Vagina (tissue), 2 donors: ENCODE measurements at regions of chr16 and their contacts with region 1.

Region 1: DNA sequence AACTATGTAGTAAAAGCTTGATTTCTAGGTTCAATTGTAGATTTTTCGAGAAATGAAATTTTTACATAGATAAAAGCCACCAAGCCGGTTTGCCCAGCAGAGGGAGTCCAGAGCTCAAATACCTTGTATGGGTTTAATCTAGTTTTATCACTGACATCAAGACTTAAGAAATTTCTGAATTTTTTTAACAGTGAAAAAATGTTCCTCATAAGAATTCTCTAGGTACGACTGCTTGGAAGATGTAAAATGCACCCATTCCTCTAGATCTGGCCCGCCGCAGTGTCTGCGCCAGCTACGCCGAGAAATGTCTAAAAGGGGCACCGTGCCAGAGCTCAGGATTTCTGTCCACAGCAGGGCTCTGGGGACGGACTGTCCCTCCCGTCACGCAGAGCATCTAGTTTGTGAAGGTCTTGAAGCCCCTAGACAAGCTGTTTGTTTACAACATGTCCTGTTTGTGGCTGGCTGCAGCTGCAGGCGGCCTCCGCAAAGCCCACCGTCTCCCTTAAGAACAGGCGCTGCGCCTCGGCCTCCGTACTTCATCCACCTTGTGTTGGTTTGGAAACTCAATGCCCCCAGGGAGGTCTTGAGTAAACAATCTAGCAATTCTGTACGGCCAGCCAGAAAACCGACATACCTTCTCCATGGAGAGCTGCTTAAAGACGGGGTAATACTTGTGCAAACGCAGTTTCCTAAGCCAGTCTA is 24.8 kb downstream of the MAP1LC3B start:
- DNase-seq: no peak
- H3K4me3 ChIP-seq: no peak overlapping the region
- H3K27ac ChIP-seq: no peak overlapping the region
- H3K4me1 ChIP-seq: no peaks in the 10 kb centered on the region
- H3K27me3 ChIP-seq: no peaks in the 10 kb centered on the region
- CTCF ChIP-seq: peak; percentile 45 to 74 (median 64)
- POLR2A ChIP-seq: no peak

Region 2: GRCh38 chr16:85767569-85767968 is 1649.4 kb before region 1 on chr16:
- intact Hi-C with region 1: no loop called
- DNase-seq: no peak
- H3K4me3 ChIP-seq: no peak overlapping the region
- H3K27ac ChIP-seq: no peak overlapping the region
- H3K4me1 ChIP-seq: no peaks in the 10 kb centered on the region
- H3K27me3 ChIP-seq: no peaks in the 10 kb centered on the region
- CTCF ChIP-seq: no peak
- POLR2A ChIP-seq: no peak

Region 3: DNA sequence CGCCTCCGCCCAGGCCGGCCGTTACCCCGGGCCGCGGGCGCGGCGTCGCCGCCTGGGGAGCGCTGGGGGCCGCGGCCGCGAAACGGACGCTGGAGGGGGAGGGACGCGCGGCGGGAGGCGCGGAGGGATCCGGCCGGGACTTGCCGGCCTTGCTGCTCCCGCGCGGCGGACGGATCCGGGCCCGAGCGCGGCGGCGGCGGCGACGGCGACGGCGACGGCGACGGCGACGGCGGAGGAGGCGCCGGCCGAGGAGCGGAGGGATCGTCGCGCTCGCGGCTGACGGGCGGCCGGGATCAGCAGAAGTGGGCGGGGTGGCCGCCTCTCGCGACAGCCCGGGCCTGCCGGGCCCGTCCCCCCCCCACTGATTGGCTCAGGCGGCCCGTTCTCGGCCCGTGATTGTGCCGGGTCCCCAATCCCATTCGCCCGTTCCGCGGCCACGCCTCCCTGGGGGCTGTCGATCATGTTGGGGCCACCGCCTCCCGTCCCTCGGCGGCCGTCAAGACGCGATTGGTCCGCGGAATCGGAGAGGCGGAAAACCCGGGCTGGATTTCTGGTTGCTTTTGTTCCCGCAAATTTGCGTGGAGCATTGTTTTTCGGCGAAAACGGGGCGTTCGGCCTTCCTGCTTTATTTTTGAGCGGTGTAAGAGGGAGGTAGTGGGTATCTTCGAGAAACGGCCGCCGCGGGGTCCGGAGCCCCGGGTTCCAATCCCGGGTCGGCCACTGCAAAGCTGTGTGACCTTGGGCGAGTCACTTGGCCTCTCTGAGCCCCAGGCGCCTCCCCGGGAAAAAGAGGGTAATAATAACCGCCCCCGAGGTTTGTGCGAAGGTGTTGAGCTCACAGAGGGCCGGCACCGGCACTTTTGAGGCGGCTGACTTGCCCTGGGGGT is 76.0 kb after region 1 on chr16 and contains the start of gene ZCCHC14:
- intact Hi-C with region 1: loop called (anchors 10 kb)
- DNase-seq: peak in 1 of 2 donors; percentile 98
- H3K4me3 ChIP-seq: peak within 1 kb of the TSS; percentile 49 to 68
- H3K27ac ChIP-seq: peak within 1 kb of the TSS; percentile 71
- H3K4me1 ChIP-seq: peaks cover 46% of the 10 kb centered on the region
- H3K27me3 ChIP-seq: no peaks in the 10 kb centered on the region
- CTCF ChIP-seq: no peak
- POLR2A ChIP-seq: peak; percentile 17 to 88
- total RNA-seq, gene ZCCHC14: 74.2 TPM

Region 4: DNA sequence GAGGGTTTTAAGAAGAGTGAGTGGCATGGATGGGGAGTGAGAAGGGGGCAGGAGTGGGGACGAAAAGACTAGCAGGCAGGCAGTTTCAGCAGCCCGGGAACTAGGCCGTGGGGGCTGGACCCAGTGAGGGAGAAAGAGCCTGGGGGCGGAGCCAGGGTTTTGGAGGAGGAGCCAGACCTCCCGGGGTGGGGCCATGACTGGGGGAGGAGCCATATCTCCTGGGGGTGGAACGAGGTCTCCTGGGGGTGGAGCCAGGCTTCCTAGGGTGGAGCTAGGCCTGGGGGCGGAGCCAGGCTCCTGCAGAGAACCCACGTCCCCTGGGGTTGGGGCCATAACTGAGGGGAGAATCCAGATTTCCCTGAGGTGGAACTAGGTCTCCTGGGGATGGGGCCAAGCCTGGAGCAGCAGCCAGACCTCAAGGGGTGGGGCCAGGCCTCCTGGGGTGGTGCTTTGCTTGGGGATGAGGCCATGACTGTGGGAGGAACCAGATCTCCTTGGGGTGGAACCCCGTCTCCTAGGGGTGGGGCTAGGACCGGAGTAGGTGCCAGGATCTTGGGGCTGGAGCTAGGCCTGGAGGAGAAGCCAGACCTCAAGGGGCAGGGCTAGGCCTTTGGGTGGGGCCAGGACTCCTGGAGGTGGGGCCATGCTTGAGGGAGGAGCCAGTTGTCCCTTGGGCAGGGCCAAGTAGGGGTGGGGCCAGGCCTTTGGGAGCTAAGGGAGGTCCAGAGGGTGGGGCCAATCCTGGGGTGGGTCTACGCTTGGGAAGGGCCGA is 143.6 kb after region 1 on chr16:
- intact Hi-C with region 1: loop called (anchors 10 kb)
- DNase-seq: no peak
- H3K4me3 ChIP-seq: no peak overlapping the region
- H3K27ac ChIP-seq: no peak overlapping the region
- H3K4me1 ChIP-seq: peaks cover 8% of the 10 kb centered on the region
- H3K27me3 ChIP-seq: no peaks in the 10 kb centered on the region
- CTCF ChIP-seq: no peak
- POLR2A ChIP-seq: no peak

Region 5: GRCh38 chr16:87636072-87636684 is 219.2 kb after region 1 on chr16:
- intact Hi-C with region 1: loop called (anchors 10 kb)
- DNase-seq: no peak
- H3K4me3 ChIP-seq: peak overlapping the region in 1 of 2 donors; percentile 35
- H3K27ac ChIP-seq: no peak overlapping the region
- H3K4me1 ChIP-seq: peaks cover 16% of the 10 kb centered on the region
- H3K27me3 ChIP-seq: no peaks in the 10 kb centered on the region
- CTCF ChIP-seq: peak in 2 of 3 experiments; percentile 33 to 48
- POLR2A ChIP-seq: no peak